BJ (cell line): ENCODE measurements at regions of chr12 and their contacts with region 1.

Region 1: GRCh38 chr12:83823431-83823963 is 1089.1 kb downstream of the SLC6A15 start:
- DNase-seq: no peak
- H3K4me3 ChIP-seq: no peak overlapping the region
- H3K27me3 ChIP-seq: no peaks in the 10 kb centered on the region
- CTCF ChIP-seq: peak; percentile 36

Region 2: DNA sequence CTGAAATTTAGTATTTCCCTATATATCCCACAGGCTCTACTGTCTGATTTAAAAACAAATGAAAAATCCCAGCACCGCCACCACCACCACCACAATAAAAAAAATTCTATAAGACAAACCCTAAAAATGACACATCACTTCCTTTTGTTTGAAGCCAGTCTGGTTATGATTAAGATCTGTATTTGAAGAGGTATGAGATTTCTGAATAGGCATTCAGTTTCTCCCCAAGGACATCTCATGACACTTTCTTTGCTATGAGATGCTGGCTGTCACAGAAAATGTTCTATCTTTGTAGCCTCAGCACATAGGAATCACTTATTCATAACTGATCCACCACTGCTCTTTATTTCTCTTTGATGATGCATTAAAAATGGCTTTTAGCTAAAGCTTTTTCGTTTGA is 18.1 kb after region 1 on chr12:
- CTCF ChIA-PET with region 1: interaction called, 13 read pairs
- POLR2A ChIA-PET with region 1: no interaction called
- DNase-seq: no peak
- H3K4me3 ChIP-seq: no peak overlapping the region
- H3K27me3 ChIP-seq: no peaks in the 10 kb centered on the region
- CTCF ChIP-seq: no peak

Region 3: GRCh38 chr12:84397263-84397662 is 573.8 kb after region 1 on chr12:
- CTCF ChIA-PET with region 1: interaction called, 13 read pairs
- POLR2A ChIA-PET with region 1: no interaction called
- DNase-seq: no peak
- H3K4me3 ChIP-seq: no peak overlapping the region
- H3K27me3 ChIP-seq: no peaks in the 10 kb centered on the region
- CTCF ChIP-seq: peak; percentile 13; the same call in 1 of the 2 replicates

Region 4: GRCh38 chr12:84502907-84503787 is 679.6 kb after region 1 on chr12:
- CTCF ChIA-PET with region 1: interaction called, 17 read pairs
- POLR2A ChIA-PET with region 1: no interaction called
- DNase-seq: no peak
- H3K4me3 ChIP-seq: no peak overlapping the region
- H3K27me3 ChIP-seq: no peaks in the 10 kb centered on the region
- CTCF ChIP-seq: peak; percentile 81